ENCODE measurements at regions of chr1 and their contacts with region 1.

Region 1: GRCh38 chr1:167220537-167221125 is at the start of gene POU2F1:
- DNase-seq: peak; percentile 99
- H3K4me3 Mint-ChIP-seq: peak within 1 kb of the TSS; percentile 99
- H3K27ac Mint-ChIP-seq: peak within 1 kb of the TSS; percentile 99
- H3K4me1 Mint-ChIP-seq: peaks cover 37% of the 10 kb centered on the region
- H3K27me3 Mint-ChIP-seq: peaks cover 2% of the 10 kb centered on the region
- total RNA-seq, gene POU2F1: 17.6 to 19.4 TPM

Region 2: DNA sequence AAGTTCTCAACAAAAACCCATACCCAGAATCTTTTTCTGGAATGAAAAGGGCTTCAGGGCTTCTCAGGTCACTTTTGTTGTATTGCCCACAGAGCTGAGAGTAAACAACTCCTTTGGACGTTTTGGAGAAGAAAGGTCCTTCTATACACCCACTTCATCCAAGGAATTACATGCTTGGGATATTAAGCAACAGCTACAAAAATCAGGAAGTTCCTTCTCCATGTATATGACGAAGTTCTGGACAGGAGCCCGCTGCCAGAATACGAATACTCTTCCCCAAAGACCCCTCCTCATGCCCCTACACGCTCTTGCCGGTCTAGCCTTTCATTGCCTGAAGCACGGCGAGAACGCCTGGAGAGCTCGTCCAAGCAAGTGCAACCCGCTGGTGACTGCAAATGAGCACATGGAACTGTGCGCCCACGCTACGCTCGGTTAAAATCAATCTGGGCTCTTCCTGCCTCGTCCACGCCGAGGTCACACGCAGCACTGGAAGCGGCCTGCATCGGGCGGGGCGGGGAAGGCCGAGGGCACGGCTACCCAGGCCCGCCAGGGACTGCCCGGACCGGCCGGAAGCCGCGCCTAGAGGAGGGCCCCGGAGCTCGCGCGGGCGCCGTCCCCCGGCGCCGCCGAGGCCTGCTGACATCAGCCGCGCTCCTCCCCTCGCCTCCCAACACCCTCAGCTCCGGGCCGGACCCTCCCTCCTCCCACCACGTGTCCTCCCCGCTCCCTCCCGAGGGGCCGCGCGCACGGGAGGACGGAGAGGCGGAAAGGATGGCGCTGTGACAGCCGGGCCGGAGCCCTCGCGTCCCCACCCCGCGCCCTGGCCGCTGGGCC is 381.6 kb before region 1 on chr1 and contains the start of gene POGK:
- CTCF ChIA-PET with region 1: no interaction called
- intact Hi-C with region 1: loop called (anchors 1 kb)
- DNase-seq: peak; percentile 91
- H3K4me3 Mint-ChIP-seq: peak within 1 kb of the TSS; percentile 95
- H3K27ac Mint-ChIP-seq: peak within 1 kb of the TSS; percentile 96
- H3K4me1 Mint-ChIP-seq: peaks cover 46% of the 10 kb centered on the region
- H3K27me3 Mint-ChIP-seq: no peaks in the 10 kb centered on the region
- total RNA-seq, gene POGK: 33.1 to 34.9 TPM

Region 3: GRCh38 chr1:167066333-167067122 is 154.1 kb before region 1 on chr1:
- CTCF ChIA-PET with region 1: interaction called, 17 read pairs
- intact Hi-C with region 1: loop called (anchors 1 kb)
- DNase-seq: peak; percentile 82
- H3K4me3 Mint-ChIP-seq: no peak overlapping the region
- H3K27ac Mint-ChIP-seq: no peak overlapping the region
- H3K4me1 Mint-ChIP-seq: peaks cover 2% of the 10 kb centered on the region
- H3K27me3 Mint-ChIP-seq: no peaks in the 10 kb centered on the region

Region 4: GRCh38 chr1:167114725-167115124 is 105.9 kb before region 1 on chr1:
- CTCF ChIA-PET with region 1: no interaction called
- intact Hi-C with region 1: no loop called
- DNase-seq: no peak
- H3K4me3 Mint-ChIP-seq: no peak overlapping the region
- H3K27ac Mint-ChIP-seq: no peak overlapping the region
- H3K4me1 Mint-ChIP-seq: peaks cover 14% of the 10 kb centered on the region
- H3K27me3 Mint-ChIP-seq: no peaks in the 10 kb centered on the region

Region 5: GRCh38 chr1:167207940-167208623 is 12.5 kb before region 1 on chr1:
- CTCF ChIA-PET with region 1: interaction called, 15 read pairs
- intact Hi-C with region 1: loop called (anchors 1 kb)
- DNase-seq: no peak
- H3K4me3 Mint-ChIP-seq: no peak overlapping the region
- H3K27ac Mint-ChIP-seq: peak overlapping the region; percentile 91
- H3K4me1 Mint-ChIP-seq: peaks cover 9% of the 10 kb centered on the region
- H3K27me3 Mint-ChIP-seq: no peaks in the 10 kb centered on the region

Region 6: DNA sequence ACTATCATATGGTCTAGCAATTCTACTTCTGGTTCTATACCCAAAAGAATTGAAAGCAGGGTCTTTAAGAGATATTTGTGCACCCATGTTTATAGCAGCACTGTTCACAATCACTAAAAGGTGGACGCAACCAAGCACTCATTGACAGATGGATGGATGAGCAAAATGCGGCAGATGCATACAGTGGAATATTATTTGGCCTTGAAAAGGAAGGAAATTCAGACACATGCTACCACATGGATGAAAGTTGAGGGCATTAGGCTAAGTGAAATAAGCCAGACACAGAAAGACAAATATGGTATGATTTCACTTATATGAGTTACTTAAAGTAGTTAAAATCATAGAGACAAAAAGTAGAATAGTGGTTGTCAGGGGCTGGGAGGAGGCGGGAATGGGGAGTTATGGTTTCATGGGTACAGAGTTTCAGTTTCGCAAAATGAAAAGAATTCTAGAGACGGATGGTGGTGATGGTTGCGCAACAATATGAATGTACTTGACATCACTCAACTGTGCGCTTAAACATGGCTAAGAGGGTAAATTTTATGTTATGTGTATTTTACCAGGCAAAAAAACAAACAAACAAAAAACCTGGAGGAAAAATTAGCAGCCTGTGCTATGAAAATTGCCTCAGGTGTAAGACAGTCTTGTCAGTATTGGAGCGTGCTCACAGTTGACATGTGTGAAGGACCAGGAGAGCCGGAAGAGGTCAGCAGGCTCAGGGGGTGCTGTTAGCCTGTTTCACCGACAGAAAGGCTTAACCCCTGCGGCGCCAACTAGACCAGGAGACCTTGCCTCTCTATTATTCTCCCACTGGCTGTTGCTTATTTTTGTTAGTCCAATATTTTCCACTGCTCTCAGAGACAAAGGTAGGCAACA is 271.2 kb after region 1 on chr1:
- CTCF ChIA-PET with region 1: no interaction called
- intact Hi-C with region 1: loop called (anchors 1 kb)
- DNase-seq: peak; percentile 60
- H3K4me3 Mint-ChIP-seq: peak overlapping the region; percentile 69
- H3K27ac Mint-ChIP-seq: peak overlapping the region; percentile 92
- H3K4me1 Mint-ChIP-seq: peaks cover 94% of the 10 kb centered on the region
- H3K27me3 Mint-ChIP-seq: no peaks in the 10 kb centered on the region

Region 7: GRCh38 chr1:167553136-167554027 is 332.8 kb after region 1 on chr1 and contains the start of gene CREG1:
- CTCF ChIA-PET with region 1: interaction called, 4 read pairs
- intact Hi-C with region 1: loop called (anchors 1 kb)
- DNase-seq: peak; percentile 93
- H3K4me3 Mint-ChIP-seq: peak within 1 kb of the TSS; percentile 79
- H3K27ac Mint-ChIP-seq: no peak within 1 kb of the TSS
- H3K4me1 Mint-ChIP-seq: peaks cover 40% of the 10 kb centered on the region
- H3K27me3 Mint-ChIP-seq: no peaks in the 10 kb centered on the region
- total RNA-seq, gene CREG1: 9.6 to 10.7 TPM

Region 8: DNA sequence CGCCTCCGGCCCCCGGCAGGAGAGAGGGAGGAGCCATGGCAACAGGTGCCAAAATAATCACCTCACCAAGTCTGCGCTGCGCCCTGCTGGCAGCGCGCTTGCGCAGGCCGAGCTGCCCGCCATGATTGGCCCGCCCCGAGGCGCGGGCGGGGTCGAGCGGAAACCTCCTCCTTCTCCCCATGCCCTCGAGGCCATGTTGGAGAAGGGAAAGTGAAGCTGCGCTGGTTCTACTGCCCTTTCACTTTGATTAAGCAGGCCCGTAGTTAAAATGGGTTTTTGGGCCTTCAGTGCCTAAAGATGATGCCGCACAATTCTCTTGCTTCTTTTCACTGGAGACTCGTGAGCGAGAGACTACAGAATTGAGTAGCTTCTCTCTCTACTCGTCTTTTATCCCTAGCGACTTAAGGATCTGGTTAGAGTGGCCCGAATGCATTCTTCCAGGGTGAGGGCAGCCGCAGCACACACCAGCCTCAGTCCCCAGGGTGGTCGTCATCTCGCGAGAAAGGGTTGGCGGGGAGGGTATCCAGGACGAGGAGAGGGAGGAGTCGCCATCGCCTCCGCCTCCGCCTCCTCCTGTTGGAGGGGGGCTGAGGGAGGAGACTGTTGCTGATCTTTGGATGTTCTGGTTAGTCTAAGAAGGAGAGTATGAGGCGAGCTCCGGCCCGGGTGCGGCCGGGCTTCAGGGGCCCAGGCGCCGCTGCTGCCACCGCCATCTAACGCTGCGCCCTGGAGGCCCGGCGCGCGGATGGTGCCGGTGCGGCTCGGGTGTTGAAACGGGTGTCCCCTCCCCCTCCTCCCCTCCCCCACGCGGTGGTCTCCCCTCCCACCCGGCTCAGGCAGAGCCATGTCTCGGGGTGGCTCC is 715.7 kb after region 1 on chr1 and contains the start of gene DCAF6:
- CTCF ChIA-PET with region 1: no interaction called
- intact Hi-C with region 1: loop called (anchors 1 kb)
- DNase-seq: peak; percentile 97
- H3K4me3 Mint-ChIP-seq: peak within 1 kb of the TSS; percentile 85
- H3K27ac Mint-ChIP-seq: peak within 1 kb of the TSS; percentile 100
- H3K4me1 Mint-ChIP-seq: peaks cover 32% of the 10 kb centered on the region
- H3K27me3 Mint-ChIP-seq: no peaks in the 10 kb centered on the region
- total RNA-seq, gene DCAF6: 15.4 to 15.9 TPM

Region 9: GRCh38 chr1:168187177-168187576 is 966.5 kb after region 1 on chr1:
- CTCF ChIA-PET with region 1: no interaction called
- intact Hi-C with region 1: no loop called
- DNase-seq: no peak
- H3K4me3 Mint-ChIP-seq: no peak overlapping the region
- H3K27ac Mint-ChIP-seq: no peak overlapping the region
- H3K4me1 Mint-ChIP-seq: peaks cover 5% of the 10 kb centered on the region
- H3K27me3 Mint-ChIP-seq: no peaks in the 10 kb centered on the region